B cell (primary cell): ENCODE measurements at regions of chr18 and their contacts with region 1.

Region 1: GRCh38 chr18:23356915-23357601 is 96.0 kb upstream of the RIOK3 start:
- DNase-seq: no peak
- ATAC-seq: no peak
- H3K4me3 ChIP-seq: no peak overlapping the region
- H3K4me3 Mint-ChIP-seq: no peak overlapping the region
- H3K27ac ChIP-seq: no peak overlapping the region
- H3K27ac Mint-ChIP-seq: no peak overlapping the region
- H3K4me1 ChIP-seq: peaks cover 17 to 24% of the 10 kb centered on the region in 2 donors
- H3K4me1 Mint-ChIP-seq: peaks cover 35% of the 10 kb centered on the region
- H3K27me3 ChIP-seq: no peaks in the 10 kb centered on the region
- H3K27me3 Mint-ChIP-seq: no peaks in the 10 kb centered on the region
- CTCF ChIP-seq: no peak

Region 2: DNA sequence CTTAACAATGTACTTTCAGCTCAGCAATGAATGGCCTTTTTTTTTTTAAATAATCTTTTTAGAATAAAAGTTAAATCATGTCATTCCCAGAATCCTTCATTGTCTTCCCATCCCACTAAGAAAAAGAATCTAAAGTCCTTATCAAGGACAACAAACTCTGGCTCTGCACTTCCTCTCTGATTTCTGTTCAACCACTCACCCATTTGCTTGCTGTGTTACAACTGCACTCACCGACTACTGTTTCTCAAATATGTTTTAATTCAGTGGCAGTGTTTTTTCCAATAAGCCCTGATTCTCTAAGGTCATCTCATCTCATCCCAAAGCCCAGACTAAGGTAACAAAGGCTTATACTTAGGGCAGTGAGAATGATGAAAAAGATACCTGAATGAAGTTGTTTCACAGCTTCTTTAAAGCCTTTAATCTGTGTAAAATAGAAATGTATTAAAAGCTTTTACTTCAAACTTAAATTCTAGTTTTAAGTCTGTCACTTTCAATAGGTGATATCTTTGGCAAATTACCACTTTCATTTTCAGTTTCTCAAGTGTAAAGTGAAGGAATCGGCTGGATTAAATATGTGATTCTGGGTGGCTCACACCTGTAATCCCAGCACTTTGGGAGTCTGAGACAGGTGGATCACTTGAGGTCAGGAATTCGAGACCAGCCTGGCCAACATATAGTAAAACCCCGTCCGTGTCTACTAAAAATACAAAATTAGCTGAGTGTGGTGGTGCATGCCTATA is 336.3 kb before region 1 on chr18:
- CTCF ChIA-PET with region 1: no interaction called
- POLR2A ChIA-PET with region 1: no interaction called
- intact Hi-C with region 1: loop called (anchors 5 kb)
- DNase-seq: no peak
- ATAC-seq: no peak
- H3K4me3 ChIP-seq: peak overlapping the region in 1 of 5 experiments; percentile 29
- H3K4me3 Mint-ChIP-seq: peak overlapping the region; percentile 42
- H3K27ac ChIP-seq: peak overlapping the region in 1 of 2 donors; percentile 8
- H3K27ac Mint-ChIP-seq: peak overlapping the region; percentile 33
- H3K4me1 ChIP-seq: peaks cover 0 to 2% of the 10 kb centered on the region in 2 donors
- H3K4me1 Mint-ChIP-seq: peaks cover 11% of the 10 kb centered on the region
- H3K27me3 ChIP-seq: no peaks in the 10 kb centered on the region
- H3K27me3 Mint-ChIP-seq: no peaks in the 10 kb centered on the region
- CTCF ChIP-seq: no peak

Region 3: GRCh38 chr18:23231340-23232021 is 125.6 kb before region 1 on chr18:
- CTCF ChIA-PET with region 1: interaction called, 4 read pairs
- POLR2A ChIA-PET with region 1: no interaction called
- intact Hi-C with region 1: loop called (anchors 2 kb)
- DNase-seq: peak; percentile 96
- ATAC-seq: peak; percentile 76
- H3K4me3 ChIP-seq: peak overlapping the region in 3 of 5 experiments; percentile 4 to 14 (median 5)
- H3K4me3 Mint-ChIP-seq: peak overlapping the region; percentile 82
- H3K27ac ChIP-seq: peak overlapping the region; percentile 71 to 78
- H3K27ac Mint-ChIP-seq: peak overlapping the region; percentile 97
- H3K4me1 ChIP-seq: peaks cover 41 to 47% of the 10 kb centered on the region in 2 donors
- H3K4me1 Mint-ChIP-seq: peaks cover 66% of the 10 kb centered on the region
- H3K27me3 ChIP-seq: peaks cover 0 to 12% (median 0%) of the 10 kb centered on the region in 4 experiments
- H3K27me3 Mint-ChIP-seq: no peaks in the 10 kb centered on the region
- CTCF ChIP-seq: no peak

Region 4: DNA sequence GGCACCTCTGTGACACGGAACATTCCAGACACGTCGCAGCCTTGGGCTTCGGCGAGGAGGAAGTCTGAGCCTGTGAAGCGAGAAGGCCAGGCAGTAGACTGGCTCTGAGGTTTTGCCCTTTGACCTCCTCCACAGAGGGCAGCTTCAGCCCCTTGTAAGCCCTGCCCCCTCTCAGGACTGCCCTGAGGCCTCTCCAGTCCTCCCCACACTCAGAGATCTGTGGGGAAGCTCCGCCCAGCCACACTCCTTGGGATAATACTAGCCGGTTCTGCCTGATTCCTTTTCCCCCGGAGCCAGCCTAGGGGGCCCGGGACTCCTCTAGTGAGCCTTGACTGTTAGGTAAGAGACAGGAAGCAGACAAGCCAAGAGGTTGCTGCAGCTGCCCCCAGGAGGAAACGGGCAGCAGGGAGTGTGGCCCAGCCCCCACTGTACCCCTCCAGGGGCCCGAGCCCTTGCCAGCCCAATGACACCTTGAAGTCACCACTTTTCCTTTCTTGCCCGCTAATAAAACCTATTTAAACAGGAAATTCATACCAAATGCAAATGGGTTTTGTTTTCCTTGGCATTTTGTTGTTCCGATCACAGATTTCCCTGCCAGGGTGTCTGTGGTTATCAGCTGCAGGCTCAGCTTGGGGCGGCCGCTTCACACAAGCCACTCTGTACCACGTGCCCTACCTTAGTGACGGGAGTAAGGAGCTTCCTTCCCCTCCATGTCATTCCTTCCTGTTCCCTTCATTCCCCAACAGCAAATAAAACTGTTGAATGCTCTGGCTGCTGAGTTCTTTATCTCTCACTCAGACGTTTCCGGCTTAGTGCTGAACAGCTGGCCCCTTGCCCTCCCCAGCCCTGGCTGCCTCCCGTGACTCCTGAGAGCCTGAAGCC is 97.1 kb before region 1 on chr18:
- CTCF ChIA-PET with region 1: no interaction called
- POLR2A ChIA-PET with region 1: interaction called, 15 read pairs
- intact Hi-C with region 1: no loop called
- DNase-seq: peak; percentile 45
- ATAC-seq: peak; percentile 73
- H3K4me3 ChIP-seq: peak overlapping the region in 4 of 5 experiments; percentile 15 to 41 (median 38)
- H3K4me3 Mint-ChIP-seq: peak overlapping the region; percentile 84
- H3K27ac ChIP-seq: no peak overlapping the region
- H3K27ac Mint-ChIP-seq: peak overlapping the region; percentile 85
- H3K4me1 ChIP-seq: peaks cover 23 to 26% of the 10 kb centered on the region in 2 donors
- H3K4me1 Mint-ChIP-seq: peaks cover 42% of the 10 kb centered on the region
- H3K27me3 ChIP-seq: peaks cover 0 to 13% (median 0%) of the 10 kb centered on the region in 4 experiments
- H3K27me3 Mint-ChIP-seq: peaks cover 3% of the 10 kb centered on the region
- CTCF ChIP-seq: no peak

Region 5: DNA sequence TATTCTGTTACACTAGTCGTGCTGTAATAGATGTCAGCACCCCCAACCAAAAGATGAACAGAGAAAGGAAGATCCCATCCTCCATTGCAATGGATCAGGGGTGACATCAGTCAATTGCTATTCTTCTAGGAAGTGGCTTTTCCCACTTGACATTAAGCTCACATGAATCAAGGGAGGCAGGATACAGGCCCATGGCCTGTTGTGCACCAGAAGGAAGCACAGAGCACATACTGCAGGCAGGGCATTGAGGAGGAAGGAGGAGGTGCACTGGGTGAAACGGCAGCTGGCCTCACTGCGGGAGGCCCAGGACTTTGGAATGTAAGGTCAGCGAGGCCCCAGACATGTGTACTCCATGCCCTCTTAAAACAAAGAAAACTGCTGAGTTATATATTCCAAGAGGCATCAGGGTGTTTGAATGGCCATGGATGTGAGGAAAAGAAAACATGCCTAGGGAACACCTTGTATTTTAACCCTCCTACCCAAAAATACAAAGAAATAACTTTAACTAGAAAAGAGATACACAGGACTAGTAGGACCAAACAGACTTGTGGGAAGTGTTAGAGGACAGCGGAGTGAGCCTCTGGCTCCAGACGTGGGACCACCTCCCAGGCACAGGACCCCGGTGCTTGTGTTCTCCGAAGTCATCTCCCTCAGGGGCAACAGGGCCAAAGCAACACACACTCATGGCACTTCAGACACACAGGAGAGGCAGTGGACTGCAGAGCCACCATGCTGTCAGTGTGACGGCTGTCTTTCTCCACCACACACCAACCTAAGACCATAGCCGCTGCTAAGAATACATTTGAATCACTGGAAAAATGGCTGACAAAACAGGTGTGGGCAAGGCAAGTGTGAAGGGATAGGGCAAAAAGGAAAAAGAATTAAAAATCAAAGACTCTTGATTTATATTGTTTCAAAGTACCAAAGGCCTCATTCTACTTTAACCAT is 44.6 kb after region 1 on chr18:
- CTCF ChIA-PET with region 1: no interaction called
- POLR2A ChIA-PET with region 1: no interaction called
- intact Hi-C with region 1: no loop called
- DNase-seq: no peak
- ATAC-seq: no peak
- H3K4me3 ChIP-seq: no peak overlapping the region
- H3K4me3 Mint-ChIP-seq: no peak overlapping the region
- H3K27ac ChIP-seq: no peak overlapping the region
- H3K27ac Mint-ChIP-seq: no peak overlapping the region
- H3K4me1 ChIP-seq: no peaks in the 10 kb centered on the region
- H3K4me1 Mint-ChIP-seq: no peaks in the 10 kb centered on the region
- H3K27me3 ChIP-seq: no peaks in the 10 kb centered on the region
- H3K27me3 Mint-ChIP-seq: no peaks in the 10 kb centered on the region
- CTCF ChIP-seq: no peak